ENCODE measurements at regions of chr10 and their contacts with region 1.

Region 1: DNA sequence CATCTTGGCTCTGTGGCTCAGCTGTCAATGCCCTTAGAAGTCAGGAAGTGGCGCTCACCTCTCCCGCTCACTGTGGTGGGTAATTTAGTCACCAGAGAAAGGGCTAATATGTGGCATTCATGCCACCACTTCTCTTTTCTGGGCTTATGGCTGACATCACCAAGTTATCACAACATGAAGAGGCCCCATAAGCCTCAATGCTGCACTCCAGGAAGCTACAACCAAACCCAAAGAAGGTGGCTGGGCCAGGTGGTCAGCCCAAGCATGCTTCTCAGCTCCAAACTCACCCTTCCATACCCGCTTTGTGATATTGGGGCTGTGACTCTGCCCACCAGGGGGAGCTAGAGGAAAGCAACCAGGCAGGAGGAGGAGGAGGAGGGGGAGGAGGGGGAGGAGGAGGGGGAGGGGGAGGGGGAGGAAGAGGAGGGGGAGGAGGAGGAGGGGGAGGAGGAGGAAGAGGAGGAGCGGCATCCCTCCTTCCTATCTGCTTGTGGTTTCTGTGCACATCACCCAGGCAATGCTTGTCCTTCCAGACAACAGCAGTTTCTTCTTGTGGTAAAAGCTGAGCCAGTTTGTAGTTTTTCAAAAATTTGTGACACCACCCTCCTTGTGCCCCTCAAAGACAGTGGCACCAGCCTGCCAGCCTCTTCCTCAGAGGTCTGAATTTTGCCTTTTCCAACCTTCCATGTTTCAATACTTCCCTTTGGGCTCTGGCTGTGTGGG is 42.1 kb downstream of the CYP26A1 start:
- DNase-seq: peak; percentile 15
- ATAC-seq: peak; percentile 79
- H3K4me3 ChIP-seq: no peak overlapping the region
- H3K27ac ChIP-seq: no peak overlapping the region
- H3K4me1 ChIP-seq: no peaks in the 10 kb centered on the region
- H3K27me3 ChIP-seq: peaks cover 7% of the 10 kb centered on the region; the same call in 1 of the 2 replicates
- CTCF ChIP-seq: peak; percentile 58

Region 2: GRCh38 chr10:93006435-93007039 is 109.3 kb before region 1 on chr10:
- CTCF ChIA-PET with region 1: no interaction called
- POLR2A ChIA-PET with region 1: no interaction called
- in situ Hi-C with region 1: no loop called
- intact Hi-C with region 1: no loop called
- DNase-seq: no peak
- ATAC-seq: peak; percentile 88
- H3K4me3 ChIP-seq: no peak overlapping the region
- H3K27ac ChIP-seq: no peak overlapping the region
- H3K4me1 ChIP-seq: no peaks in the 10 kb centered on the region
- H3K27me3 ChIP-seq: no peaks in the 10 kb centered on the region
- CTCF ChIP-seq: peak; percentile 84

Region 3: DNA sequence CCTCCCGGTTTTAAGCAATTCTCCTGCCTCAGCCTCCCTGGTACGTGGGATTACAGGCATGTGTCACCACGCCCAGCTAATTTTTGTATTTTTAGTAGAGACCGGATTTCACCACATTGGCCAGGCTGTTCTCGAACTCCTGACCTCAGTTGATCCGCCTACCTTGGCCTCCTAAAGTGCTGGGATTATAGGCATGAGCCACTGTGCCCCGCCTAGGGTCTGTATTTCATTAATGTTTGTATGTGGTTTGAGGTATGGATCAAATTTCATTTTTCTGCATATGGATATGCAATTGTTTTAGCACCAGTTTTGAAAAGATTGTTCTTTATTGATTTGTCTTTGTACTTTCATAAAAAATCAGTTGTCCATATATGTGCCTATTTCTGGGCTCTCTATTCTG is 16.2 kb before region 1 on chr10:
- CTCF ChIA-PET with region 1: no interaction called
- POLR2A ChIA-PET with region 1: no interaction called
- in situ Hi-C with region 1: no loop called
- intact Hi-C with region 1: no loop called
- DNase-seq: no peak
- ATAC-seq: no peak
- H3K4me3 ChIP-seq: no peak overlapping the region
- H3K27ac ChIP-seq: no peak overlapping the region
- H3K4me1 ChIP-seq: no peaks in the 10 kb centered on the region
- H3K27me3 ChIP-seq: no peaks in the 10 kb centered on the region
- CTCF ChIP-seq: no peak

Region 4: DNA sequence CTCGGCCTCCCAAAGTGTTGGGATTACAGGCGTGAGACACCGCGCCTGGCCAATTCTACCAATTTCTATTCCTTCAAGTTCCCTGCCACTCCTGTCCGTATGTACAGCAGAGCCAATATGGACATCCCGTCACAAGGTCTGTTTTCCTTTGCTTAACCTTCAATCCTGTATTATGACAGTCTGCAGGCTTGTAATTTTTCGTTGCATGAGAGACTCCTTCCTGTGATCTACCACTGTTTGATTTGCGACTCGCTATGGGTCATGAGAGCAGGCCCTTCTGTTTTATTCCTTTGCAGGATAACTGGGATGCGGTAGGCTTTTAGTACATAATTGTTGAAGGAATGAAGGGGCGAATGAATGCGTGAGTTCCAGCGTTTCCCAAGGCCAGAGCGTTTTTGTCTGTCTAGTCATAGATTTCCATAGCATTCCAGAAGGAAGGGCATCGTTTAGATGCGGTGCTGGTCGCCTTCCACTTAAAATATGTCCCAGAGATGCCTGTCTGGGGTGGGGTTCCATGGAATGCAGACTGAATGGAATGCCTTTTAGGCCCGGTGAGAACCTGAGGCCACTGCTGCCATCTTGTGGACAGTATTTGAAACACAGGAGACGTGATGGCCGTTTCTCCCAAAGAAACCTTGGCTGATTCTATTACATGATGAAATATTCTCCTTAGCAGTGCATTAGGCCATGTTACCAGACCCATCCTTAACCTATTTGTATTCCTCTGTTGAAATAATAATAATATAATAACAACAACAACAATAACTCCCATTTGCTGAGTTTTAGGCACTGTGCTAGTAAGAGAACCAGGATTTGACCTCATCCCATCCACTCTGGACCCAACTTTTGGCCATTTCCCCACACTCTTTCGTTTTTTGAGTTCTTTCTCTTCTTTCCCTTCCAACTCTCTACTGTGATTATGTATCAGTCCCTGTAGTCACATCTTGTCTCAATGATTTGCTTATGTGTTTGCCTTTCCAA is 173.1 kb after region 1 on chr10:
- CTCF ChIA-PET with region 1: interaction called, 15 read pairs
- POLR2A ChIA-PET with region 1: interaction called, 6 read pairs
- in situ Hi-C with region 1: no loop called
- intact Hi-C with region 1: loop called (anchors 10 kb)
- DNase-seq: peak; percentile 60
- ATAC-seq: peak; percentile 85
- H3K4me3 ChIP-seq: no peak overlapping the region
- H3K27ac ChIP-seq: peak overlapping the region; percentile 73; the same call in 1 of the 2 replicates
- H3K4me1 ChIP-seq: 0 out of 2 replicates have a peak, but pooled peaks cover 9% of the 10 kb centered on the region
- H3K27me3 ChIP-seq: no peaks in the 10 kb centered on the region
- CTCF ChIP-seq: peak; percentile 92

Region 5: DNA sequence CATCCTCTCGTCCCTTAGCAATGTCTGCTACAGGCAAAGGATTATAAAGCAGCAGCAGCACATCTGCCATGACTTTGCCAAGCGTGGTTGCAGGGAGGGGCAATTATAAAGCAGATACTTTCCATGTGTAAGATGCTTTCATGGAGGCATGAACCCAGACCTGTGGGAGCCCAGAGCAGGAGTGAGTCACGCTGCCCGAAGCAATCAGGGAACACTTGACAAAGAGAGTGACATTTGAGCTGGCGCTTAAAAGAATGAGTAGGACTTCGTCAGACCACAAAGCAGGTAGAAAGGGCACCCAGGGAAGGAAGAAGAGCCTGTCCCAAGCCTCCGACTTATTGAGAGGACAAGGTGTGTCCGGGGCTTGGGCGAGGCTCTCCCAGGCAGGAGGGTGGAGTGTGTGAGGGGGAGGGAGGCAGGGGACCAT is 219.1 kb after region 1 on chr10:
- CTCF ChIA-PET with region 1: interaction called, 10 read pairs
- POLR2A ChIA-PET with region 1: no interaction called
- in situ Hi-C with region 1: no loop called
- intact Hi-C with region 1: no loop called
- DNase-seq: no peak
- ATAC-seq: peak; percentile 23; the same call in 1 of the 2 replicates
- H3K4me3 ChIP-seq: no peak overlapping the region
- H3K27ac ChIP-seq: no peak overlapping the region
- H3K4me1 ChIP-seq: no peaks in the 10 kb centered on the region
- H3K27me3 ChIP-seq: no peaks in the 10 kb centered on the region
- CTCF ChIP-seq: no peak

Region 6: GRCh38 chr10:93535293-93535692 is 419.5 kb after region 1 on chr10:
- CTCF ChIA-PET with region 1: interaction called, 10 read pairs
- POLR2A ChIA-PET with region 1: no interaction called
- in situ Hi-C with region 1: no loop called
- intact Hi-C with region 1: no loop called
- DNase-seq: no peak
- ATAC-seq: no peak
- H3K4me3 ChIP-seq: no peak overlapping the region
- H3K27ac ChIP-seq: no peak overlapping the region
- H3K4me1 ChIP-seq: no peaks in the 10 kb centered on the region
- H3K27me3 ChIP-seq: no peaks in the 10 kb centered on the region
- CTCF ChIP-seq: no peak